ENCODE measurements at regions of chr16 and their contacts with region 1.

Region 1: DNA sequence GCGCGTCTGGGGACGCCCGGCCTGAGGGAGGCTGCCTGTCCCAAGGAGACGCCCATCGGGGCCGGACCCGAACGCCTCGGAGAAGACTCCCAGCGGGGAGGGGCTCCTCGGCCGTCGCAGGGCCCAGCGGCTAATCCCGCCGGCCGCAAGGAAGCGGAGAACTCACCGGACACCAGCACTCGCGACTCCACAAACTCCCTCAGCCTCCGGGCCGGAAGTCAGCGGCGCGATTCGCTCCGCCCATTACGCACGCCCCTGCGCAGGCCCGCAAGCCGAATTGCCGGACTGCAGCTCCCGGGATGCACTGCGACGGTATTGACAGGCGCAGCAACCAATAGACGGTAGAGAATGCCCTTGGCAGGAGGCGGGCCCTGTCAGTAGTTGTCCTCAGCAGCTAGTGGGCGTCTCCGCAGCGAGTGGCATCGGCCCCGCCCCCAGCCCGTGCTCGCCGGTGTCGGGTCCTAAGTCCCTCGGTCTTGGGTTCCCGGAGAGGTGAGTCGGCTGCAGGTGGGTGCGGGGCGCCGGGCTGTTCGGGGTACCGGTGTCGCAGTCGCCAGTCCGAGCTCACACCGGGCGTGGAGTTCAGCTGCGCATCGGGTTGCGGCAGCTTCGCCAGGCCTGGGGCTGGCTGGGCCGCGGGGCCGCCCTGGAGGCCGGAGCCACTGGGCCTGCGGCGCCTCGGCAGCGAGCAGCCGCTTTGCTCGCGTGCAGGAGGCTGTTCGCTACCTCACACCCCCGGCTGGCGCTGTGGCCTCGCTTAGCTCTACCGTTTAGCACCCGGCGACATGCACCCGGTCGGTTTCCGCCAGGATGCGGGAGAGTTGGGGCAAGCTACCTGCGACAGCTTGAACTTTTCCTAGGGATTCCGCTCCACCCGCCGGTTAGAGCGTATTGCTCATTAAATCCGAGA is at the starts of genes ZNF174 and ZSCAN32:
- DNase-seq: peak; percentile 96 to 100 (median 99)
- ATAC-seq: peak; percentile 97
- H3K4me3 ChIP-seq: peak within 1 kb of the TSS; percentile 64 to 89
- H3K4me3 Mint-ChIP-seq: peak within 1 kb of the TSS; percentile 88
- H3K27ac ChIP-seq: peak within 1 kb of the TSS; percentile 77 to 81
- H3K27ac Mint-ChIP-seq: peak within 1 kb of the TSS; percentile 93
- H3K4me1 ChIP-seq: peaks cover 42% of the 10 kb centered on the region
- H3K4me1 Mint-ChIP-seq: peaks cover 63% of the 10 kb centered on the region
- H3K27me3 ChIP-seq: no peaks in the 10 kb centered on the region
- H3K27me3 Mint-ChIP-seq: no peaks in the 10 kb centered on the region
- CTCF ChIP-seq: no peak
- total RNA-seq, gene ZNF174: 4.5 to 6.4 TPM
- total RNA-seq, gene ZSCAN32: 10.4 to 12.7 TPM

Region 2: DNA sequence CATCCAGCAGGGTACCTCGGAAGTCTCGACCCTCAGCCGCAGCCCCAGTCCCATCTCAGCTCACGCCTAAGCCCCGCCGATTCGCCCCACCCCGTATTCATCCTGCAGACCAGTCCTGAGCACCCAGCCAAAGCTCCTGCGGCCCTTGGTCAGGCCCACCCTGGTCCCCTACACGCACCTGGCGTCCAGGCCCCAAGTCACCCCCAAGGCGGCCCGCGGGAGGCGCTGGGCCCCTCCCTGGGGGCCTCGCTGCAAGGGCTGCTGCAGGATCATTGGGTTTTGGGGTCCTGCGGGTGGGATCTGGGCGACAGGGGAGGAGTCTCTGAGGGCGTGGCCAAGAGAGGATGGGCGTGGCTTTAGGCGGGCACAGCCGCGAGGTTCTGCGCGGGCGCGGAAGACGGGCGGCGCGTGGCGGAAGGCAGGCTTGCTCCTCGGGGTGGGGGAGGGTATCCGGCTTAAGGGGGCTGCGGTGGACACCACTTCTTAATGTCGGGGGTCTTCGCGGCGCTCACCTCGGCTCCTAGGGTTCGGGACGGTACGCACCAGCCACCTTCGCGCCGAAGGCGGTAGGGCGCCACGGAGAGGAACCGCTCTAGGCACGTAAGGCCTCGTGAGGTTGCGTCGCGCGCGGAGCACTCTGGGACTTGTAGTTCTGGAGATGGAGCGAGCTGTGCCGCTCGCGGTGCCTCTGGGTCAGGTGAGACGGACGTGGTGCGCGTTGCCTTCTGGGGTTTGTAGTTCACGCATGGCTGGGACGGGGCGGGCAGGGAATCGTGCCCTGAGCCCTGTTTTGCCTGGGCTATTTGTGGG is 377.2 kb before region 1 on chr16 and contains the starts of genes HCFC1R1 and THOC6:
- CTCF ChIA-PET with region 1: no interaction called
- POLR2A ChIA-PET with region 1: interaction called, 3 read pairs
- intact Hi-C with region 1: loop called in 1 of 2 experiments (anchors 5 kb)
- DNase-seq: peak; percentile 88 to 98 (median 96)
- ATAC-seq: peak; percentile 73
- H3K4me3 ChIP-seq: peak within 1 kb of the TSS; percentile 88 to 90
- H3K4me3 Mint-ChIP-seq: peak within 1 kb of the TSS; percentile 95
- H3K27ac ChIP-seq: peak within 1 kb of the TSS; percentile 70 to 96
- H3K27ac Mint-ChIP-seq: peak within 1 kb of the TSS; percentile 95
- H3K4me1 ChIP-seq: peaks cover 65% of the 10 kb centered on the region
- H3K4me1 Mint-ChIP-seq: peaks cover 49% of the 10 kb centered on the region
- H3K27me3 ChIP-seq: peaks cover 0 to 3% of the 10 kb centered on the region in 2 experiments
- H3K27me3 Mint-ChIP-seq: peaks cover 3% of the 10 kb centered on the region
- CTCF ChIP-seq: no peak
- total RNA-seq, gene HCFC1R1: 6.4 to 7.1 TPM
- total RNA-seq, gene THOC6: 13.1 to 14.0 TPM

Region 3: DNA sequence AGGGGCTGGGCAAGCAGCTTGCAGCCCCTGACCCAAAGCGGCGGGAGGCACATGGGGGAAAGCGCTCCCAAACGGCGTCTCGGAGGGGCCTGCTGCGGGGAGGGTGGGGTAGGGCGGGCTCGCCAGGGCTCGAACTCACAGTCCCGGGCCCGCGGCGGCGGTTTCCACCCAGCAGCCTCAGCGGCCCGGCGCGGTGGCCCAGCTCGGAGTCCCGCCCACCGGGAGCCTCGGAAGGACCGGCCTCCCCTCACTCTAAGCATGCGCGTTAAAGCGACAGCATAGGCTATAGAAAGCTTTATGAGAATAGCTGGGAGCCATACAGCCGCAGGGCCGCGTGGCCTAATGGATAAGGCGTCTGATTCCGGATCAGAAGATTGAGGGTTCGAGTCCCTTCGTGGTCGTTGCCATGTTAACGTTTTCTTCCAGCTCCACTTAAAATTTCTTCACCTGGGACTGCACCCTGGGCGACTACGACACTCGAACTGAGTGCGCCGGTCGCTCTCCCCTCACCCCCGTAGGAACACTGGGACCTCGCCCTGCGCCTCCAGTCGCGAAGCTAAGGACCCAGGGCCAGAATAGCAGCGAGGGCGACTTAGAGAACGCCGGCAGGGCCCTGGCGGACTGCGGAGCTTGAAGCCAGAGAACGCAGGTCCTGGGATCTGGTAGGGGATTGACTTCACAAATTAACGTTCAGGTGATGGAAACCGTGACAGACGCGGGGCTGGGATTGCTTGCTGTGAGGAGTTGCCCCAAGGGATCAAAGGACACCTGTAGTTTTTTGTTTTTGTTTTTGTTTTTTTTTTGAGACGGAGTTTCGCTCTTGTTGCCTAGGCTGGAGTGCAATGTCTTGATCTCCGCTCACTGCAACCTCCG is 250.5 kb before region 1 on chr16:
- CTCF ChIA-PET with region 1: no interaction called
- POLR2A ChIA-PET with region 1: interaction called, 4 read pairs
- intact Hi-C with region 1: loop called in 1 of 2 experiments (anchors 2 kb)
- DNase-seq: peak; percentile 94 to 100 (median 97)
- ATAC-seq: peak; percentile 82
- H3K4me3 ChIP-seq: peak overlapping the region; percentile 53 to 93
- H3K4me3 Mint-ChIP-seq: peak overlapping the region; percentile 88
- H3K27ac ChIP-seq: peak overlapping the region; percentile 53 to 68
- H3K27ac Mint-ChIP-seq: peak overlapping the region; percentile 88
- H3K4me1 ChIP-seq: peaks cover 23% of the 10 kb centered on the region
- H3K4me1 Mint-ChIP-seq: peaks cover 27% of the 10 kb centered on the region
- H3K27me3 ChIP-seq: no peaks in the 10 kb centered on the region
- H3K27me3 Mint-ChIP-seq: no peaks in the 10 kb centered on the region
- CTCF ChIP-seq: no peak

Region 4: GRCh38 chr16:3282730-3283524 is 118.1 kb before region 1 on chr16 and contains the start of gene ZNF263:
- CTCF ChIA-PET with region 1: interaction called, 3 read pairs
- POLR2A ChIA-PET with region 1: interaction called, 15 read pairs
- intact Hi-C with region 1: loop called (anchors 1 kb)
- DNase-seq: peak; percentile 82 to 98 (median 92)
- ATAC-seq: peak; percentile 88
- H3K4me3 ChIP-seq: peak within 1 kb of the TSS; percentile 84 to 92
- H3K4me3 Mint-ChIP-seq: peak within 1 kb of the TSS; percentile 89
- H3K27ac ChIP-seq: peak within 1 kb of the TSS; percentile 96 to 100
- H3K27ac Mint-ChIP-seq: peak within 1 kb of the TSS; percentile 96
- H3K4me1 ChIP-seq: peaks cover 28% of the 10 kb centered on the region
- H3K4me1 Mint-ChIP-seq: peaks cover 56% of the 10 kb centered on the region
- H3K27me3 ChIP-seq: no peaks in the 10 kb centered on the region
- H3K27me3 Mint-ChIP-seq: no peaks in the 10 kb centered on the region
- CTCF ChIP-seq: no peak
- total RNA-seq, gene ZNF263: 44.2 to 49.0 TPM

Region 5: GRCh38 chr16:3443108-3444031 is 42.3 kb after region 1 on chr16 and contains the starts of genes NAA60 and ZNF597:
- CTCF ChIA-PET with region 1: interaction called, 3 read pairs
- POLR2A ChIA-PET with region 1: interaction called, 15 read pairs
- intact Hi-C with region 1: loop called (anchors 1 kb)
- DNase-seq: peak; percentile 41 to 92 (median 78)
- ATAC-seq: peak; percentile 89
- H3K4me3 ChIP-seq: peak within 1 kb of the TSS; percentile 51 to 75
- H3K4me3 Mint-ChIP-seq: peak within 1 kb of the TSS; percentile 94
- H3K27ac ChIP-seq: peak within 1 kb of the TSS; percentile 61 to 87
- H3K27ac Mint-ChIP-seq: peak within 1 kb of the TSS; percentile 96
- H3K4me1 ChIP-seq: peaks cover 13% of the 10 kb centered on the region
- H3K4me1 Mint-ChIP-seq: peaks cover 32% of the 10 kb centered on the region
- H3K27me3 ChIP-seq: no peaks in the 10 kb centered on the region
- H3K27me3 Mint-ChIP-seq: no peaks in the 10 kb centered on the region
- CTCF ChIP-seq: no peak
- total RNA-seq, gene NAA60: 45.4 to 48.0 TPM
- total RNA-seq, gene ZNF597: 4.5 to 4.6 TPM

Region 6: DNA sequence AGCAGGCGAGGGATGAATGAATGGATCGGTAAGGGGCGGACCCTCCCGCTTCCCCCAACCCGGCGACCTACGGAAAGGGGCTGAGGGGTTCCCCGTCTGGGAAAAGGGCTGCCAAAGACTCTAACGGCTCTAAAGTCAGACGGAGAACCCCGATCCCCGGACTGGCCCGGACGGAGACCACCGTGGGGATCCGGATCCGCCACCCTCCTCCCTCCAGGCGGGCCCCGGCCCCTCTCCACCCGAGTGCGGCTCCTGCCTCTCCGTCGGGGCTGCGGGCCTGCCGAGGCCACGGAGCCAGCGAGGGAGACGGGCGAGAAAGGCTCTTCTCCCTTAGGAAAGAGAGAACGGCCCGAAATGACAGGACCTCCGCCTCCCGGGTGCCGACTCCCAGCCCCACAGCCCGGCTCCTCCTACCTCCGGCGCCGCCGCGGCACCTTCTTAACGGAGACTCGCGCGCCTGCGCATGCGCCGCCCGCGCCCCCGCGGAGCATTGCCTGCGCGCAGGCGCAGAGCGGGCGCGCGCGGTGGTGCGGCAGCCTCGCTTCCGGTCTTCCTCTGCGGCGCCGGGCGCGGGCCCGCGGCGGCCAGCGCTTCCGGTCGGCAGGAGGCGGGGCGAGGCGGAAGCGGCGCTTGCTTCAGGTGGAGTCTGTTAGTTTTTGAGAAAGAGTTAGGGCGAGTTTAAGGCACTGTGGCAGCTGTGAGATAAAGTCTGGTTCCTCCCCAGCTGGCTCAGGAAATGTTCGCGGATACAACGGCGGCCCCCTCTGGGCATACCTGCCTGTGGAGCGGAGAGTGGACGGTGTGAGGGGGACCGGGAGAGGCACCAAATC is 210.3 kb after region 1 on chr16 and contains the start of gene SLX4:
- CTCF ChIA-PET with region 1: no interaction called
- POLR2A ChIA-PET with region 1: no interaction called
- intact Hi-C with region 1: loop called in 1 of 2 experiments (anchors 1 kb)
- DNase-seq: peak; percentile 79 to 98 (median 91)
- ATAC-seq: peak; percentile 87
- H3K4me3 ChIP-seq: peak within 1 kb of the TSS; percentile 80 to 96
- H3K4me3 Mint-ChIP-seq: peak within 1 kb of the TSS; percentile 99
- H3K27ac ChIP-seq: peak within 1 kb of the TSS; percentile 78 to 89
- H3K27ac Mint-ChIP-seq: peak within 1 kb of the TSS; percentile 99
- H3K4me1 ChIP-seq: peaks cover 26% of the 10 kb centered on the region
- H3K4me1 Mint-ChIP-seq: peaks cover 49% of the 10 kb centered on the region
- H3K27me3 ChIP-seq: no peaks in the 10 kb centered on the region
- H3K27me3 Mint-ChIP-seq: no peaks in the 10 kb centered on the region
- CTCF ChIP-seq: no peak
- total RNA-seq, gene SLX4: 5.1 to 5.2 TPM

Region 7: GRCh38 chr16:3625911-3626732 is 225.1 kb after region 1 on chr16:
- CTCF ChIA-PET with region 1: no interaction called
- POLR2A ChIA-PET with region 1: no interaction called
- intact Hi-C with region 1: no loop called
- DNase-seq: peak in 2 of 9 experiments; percentile 27 to 44
- ATAC-seq: peak; percentile 85
- H3K4me3 ChIP-seq: no peak overlapping the region
- H3K4me3 Mint-ChIP-seq: peak overlapping the region; percentile 13
- H3K27ac ChIP-seq: peak overlapping the region; percentile 18 to 37
- H3K27ac Mint-ChIP-seq: peak overlapping the region; percentile 89
- H3K4me1 ChIP-seq: peaks cover 25% of the 10 kb centered on the region
- H3K4me1 Mint-ChIP-seq: peaks cover 38% of the 10 kb centered on the region
- H3K27me3 ChIP-seq: no peaks in the 10 kb centered on the region
- H3K27me3 Mint-ChIP-seq: no peaks in the 10 kb centered on the region
- CTCF ChIP-seq: no peak

Measured in CD8-positive, alpha-beta T cell (primary cell).